ENCODE measurements at regions of chr1 and their contacts with region 1.

Region 1: DNA sequence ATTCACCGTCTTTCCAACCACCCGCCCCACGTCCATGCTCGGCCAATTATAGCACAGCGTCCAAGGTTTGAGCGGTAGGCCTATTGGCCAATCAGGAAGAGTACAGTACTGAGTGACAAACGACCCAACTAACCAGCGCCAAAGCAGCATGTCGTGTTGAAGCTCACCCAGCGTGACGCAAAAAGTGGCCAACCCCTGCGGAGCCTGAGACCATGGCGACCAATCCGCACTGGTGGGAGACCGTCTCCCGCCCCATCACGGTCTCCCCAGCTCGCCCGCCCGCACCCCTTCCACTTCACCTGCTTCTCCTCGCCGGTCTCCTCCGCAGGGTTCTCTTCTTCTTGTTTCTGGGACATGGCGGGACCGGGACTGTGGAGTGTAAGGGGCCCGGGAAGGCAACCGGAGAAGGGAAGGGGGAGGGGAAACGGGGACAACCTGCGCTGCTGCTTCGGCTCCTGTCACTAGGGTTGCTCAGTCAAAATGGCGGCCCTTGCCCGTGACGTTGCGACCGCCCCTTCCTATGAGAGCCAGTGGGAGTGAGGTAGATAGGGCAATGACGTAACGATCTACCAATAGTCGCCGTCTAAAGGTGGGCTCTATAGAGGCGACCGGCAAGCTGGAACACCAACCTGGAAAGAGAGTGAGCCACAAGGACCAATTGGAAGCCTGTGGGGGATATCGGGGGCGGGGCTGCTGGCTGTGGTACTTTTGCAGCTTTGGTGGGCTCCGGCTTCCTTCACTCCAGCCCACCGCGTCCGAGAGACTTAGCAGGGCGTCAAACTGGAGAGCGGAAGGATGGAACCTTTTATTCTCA is at the start of gene ENSA:
- DNase-seq: peak; percentile 95
- ATAC-seq: peak; percentile 94
- H3K4me3 Mint-ChIP-seq: no peak within 1 kb of the TSS
- H3K27ac Mint-ChIP-seq: no peak within 1 kb of the TSS
- H3K4me1 Mint-ChIP-seq: peaks cover 57% of the 10 kb centered on the region
- H3K27me3 Mint-ChIP-seq: no peaks in the 10 kb centered on the region
- CTCF ChIP-seq: no peak
- total RNA-seq, gene ENSA: 219 to 254 TPM (median 224 TPM) in 3 replicates

Region 2: GRCh38 chr1:150552093-150552691 is 77.1 kb before region 1 on chr1:
- CTCF ChIA-PET with region 1: no interaction called
- POLR2A ChIA-PET with region 1: no interaction called
- DNase-seq: no peak
- ATAC-seq: no peak; the same call in 1 of the 2 replicates
- H3K4me3 Mint-ChIP-seq: no peak overlapping the region
- H3K27ac Mint-ChIP-seq: no peak overlapping the region
- H3K4me1 Mint-ChIP-seq: peaks cover 35% of the 10 kb centered on the region
- H3K27me3 Mint-ChIP-seq: peaks cover 32% of the 10 kb centered on the region
- CTCF ChIP-seq: no peak

Region 3: GRCh38 chr1:150567717-150568593 is 61.4 kb before region 1 on chr1:
- CTCF ChIA-PET with region 1: interaction called, 53 read pairs
- POLR2A ChIA-PET with region 1: interaction called, 12 read pairs
- DNase-seq: peak; percentile 91
- ATAC-seq: peak; percentile 78
- H3K4me3 Mint-ChIP-seq: peak overlapping the region; percentile 57
- H3K27ac Mint-ChIP-seq: peak overlapping the region; percentile 100
- H3K4me1 Mint-ChIP-seq: peaks cover 77% of the 10 kb centered on the region
- H3K27me3 Mint-ChIP-seq: no peaks in the 10 kb centered on the region
- CTCF ChIP-seq: no peak

Region 4: DNA sequence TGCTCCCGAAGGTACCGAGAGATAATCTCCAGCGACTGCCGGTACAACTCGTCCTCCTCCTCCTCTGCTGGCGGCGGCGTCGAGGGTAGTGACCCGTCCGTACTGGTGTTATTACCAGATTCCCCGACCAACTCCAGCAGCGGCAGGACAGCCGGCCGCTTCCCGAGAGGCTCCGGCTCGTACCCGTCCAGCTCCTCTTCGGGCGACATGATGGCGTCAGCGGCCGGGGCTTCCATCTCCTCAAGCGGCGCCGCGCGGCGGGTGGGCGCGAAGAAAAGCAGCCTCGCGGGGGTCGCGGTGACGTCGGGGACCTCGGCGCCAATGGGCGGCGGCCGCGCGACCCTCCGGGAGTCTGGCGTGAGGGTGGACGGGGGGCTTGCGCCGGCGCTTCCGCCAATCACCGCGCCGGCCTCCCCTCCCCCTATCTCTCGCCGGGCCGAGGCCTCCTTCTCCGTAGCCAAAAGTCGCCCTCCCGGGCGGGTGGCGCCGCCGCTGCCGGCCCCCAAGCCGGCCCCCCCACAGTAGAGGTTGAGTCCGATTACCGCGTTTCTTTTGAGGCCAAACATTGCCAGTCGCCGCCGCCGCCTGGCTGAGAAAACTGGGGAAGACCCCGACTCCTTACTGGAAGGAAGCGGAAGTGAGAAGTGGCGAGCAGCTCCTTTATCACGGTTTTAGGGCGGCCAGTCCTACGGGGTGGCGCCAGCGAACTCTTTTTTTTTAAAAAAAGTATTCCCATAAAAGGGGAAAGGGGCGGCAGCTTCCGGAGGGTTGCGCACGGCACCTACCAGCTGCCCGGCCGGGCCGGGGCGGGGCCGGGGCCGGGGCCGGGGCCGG is 50.1 kb before region 1 on chr1 and contains the start of gene MCL1:
- CTCF ChIA-PET with region 1: interaction called, 5 read pairs
- POLR2A ChIA-PET with region 1: interaction called, 56 read pairs
- DNase-seq: peak; percentile 89
- ATAC-seq: peak; percentile 88
- H3K4me3 Mint-ChIP-seq: peak within 1 kb of the TSS; percentile 92
- H3K27ac Mint-ChIP-seq: peak within 1 kb of the TSS; percentile 100
- H3K4me1 Mint-ChIP-seq: peaks cover 41% of the 10 kb centered on the region
- H3K27me3 Mint-ChIP-seq: no peaks in the 10 kb centered on the region; the same call in 1 of the 2 replicates
- CTCF ChIP-seq: no peak
- total RNA-seq, gene MCL1: 191 to 212 TPM (median 204 TPM) in 3 replicates

Region 5: DNA sequence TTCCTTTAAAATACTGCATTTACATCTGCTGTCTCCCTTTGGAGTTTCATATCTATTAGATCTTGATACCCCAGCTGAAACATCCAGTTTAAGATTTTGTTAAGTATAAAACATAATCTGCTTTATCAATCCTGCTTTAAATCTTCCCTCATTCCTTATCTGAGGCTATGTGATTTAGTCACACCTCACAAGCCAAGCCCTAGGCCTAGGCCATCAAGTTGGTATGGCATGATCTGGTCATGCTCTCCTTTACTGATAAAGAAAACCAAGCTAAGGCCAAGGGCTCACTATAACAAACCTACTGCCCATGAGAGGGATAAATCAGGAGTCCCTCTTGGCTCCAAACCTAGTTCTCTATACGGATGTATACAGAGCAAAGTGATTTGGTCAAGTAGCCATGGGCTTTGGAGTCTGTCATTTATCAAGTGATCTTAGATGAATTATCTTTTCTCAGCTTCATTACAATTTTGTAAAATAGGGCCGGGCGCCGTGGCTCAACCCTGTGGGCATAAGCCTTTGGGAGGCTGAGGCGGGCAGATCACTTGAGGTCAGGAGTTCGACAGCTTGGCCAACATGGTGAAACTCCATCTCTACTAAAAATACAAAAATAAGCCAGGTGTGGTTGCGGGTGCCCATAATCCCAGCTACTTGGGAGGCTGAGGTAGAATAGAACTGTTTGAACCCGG is 22.7 kb before region 1 on chr1:
- CTCF ChIA-PET with region 1: interaction called, 3 read pairs
- POLR2A ChIA-PET with region 1: interaction called, 10 read pairs
- DNase-seq: no peak
- ATAC-seq: no peak
- H3K4me3 Mint-ChIP-seq: no peak overlapping the region
- H3K27ac Mint-ChIP-seq: peak overlapping the region; percentile 90
- H3K4me1 Mint-ChIP-seq: peaks cover 42% of the 10 kb centered on the region
- H3K27me3 Mint-ChIP-seq: no peaks in the 10 kb centered on the region; the same call in 1 of the 2 replicates
- CTCF ChIP-seq: no peak

Region 6: DNA sequence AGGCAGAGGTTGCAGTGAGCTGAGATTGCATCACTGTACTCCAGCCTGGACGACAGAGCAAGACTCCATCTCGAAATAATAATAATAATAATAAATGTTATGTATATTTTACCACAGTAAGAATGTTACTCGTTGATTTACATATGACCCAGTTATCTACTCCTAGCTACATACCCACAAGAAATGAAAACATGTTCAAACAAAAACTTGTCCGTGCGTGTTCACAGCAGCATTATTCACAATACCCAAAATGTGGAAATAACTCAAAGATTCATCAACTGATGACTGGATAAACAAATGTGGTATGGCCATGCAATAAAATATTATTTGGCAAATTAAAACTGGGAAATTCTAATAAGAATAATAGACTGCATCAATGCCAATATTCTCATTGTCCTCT is 31.8 kb after region 1 on chr1:
- CTCF ChIA-PET with region 1: no interaction called
- POLR2A ChIA-PET with region 1: no interaction called
- DNase-seq: no peak
- ATAC-seq: no peak
- H3K4me3 Mint-ChIP-seq: no peak overlapping the region
- H3K27ac Mint-ChIP-seq: no peak overlapping the region
- H3K4me1 Mint-ChIP-seq: peaks cover 8% of the 10 kb centered on the region
- H3K27me3 Mint-ChIP-seq: no peaks in the 10 kb centered on the region
- CTCF ChIP-seq: no peak

Region 7: DNA sequence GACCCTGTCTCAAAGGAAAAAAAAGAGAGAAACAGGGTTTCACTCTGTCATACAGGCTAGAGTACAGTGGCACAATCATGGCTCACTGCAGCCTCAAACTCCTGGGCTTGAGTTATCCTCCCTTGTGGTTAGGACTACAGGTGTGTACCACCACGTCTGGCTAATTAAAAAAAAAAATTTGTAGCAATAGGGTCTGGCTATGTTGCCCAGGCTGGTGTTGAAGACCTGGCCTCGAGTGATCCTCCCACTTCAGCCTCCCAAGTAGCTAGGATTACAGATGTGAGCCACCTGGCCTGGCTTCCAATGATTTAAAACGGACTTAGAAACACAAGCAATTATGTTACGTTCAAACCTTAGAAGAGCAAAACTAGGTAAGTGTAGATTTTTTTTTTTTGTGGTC is 45.6 kb after region 1 on chr1:
- CTCF ChIA-PET with region 1: no interaction called
- POLR2A ChIA-PET with region 1: no interaction called
- DNase-seq: no peak
- ATAC-seq: no peak
- H3K4me3 Mint-ChIP-seq: no peak overlapping the region
- H3K27ac Mint-ChIP-seq: no peak overlapping the region
- H3K4me1 Mint-ChIP-seq: no peaks in the 10 kb centered on the region; the same call in 1 of the 2 replicates
- H3K27me3 Mint-ChIP-seq: no peaks in the 10 kb centered on the region
- CTCF ChIP-seq: no peak

Region 8: DNA sequence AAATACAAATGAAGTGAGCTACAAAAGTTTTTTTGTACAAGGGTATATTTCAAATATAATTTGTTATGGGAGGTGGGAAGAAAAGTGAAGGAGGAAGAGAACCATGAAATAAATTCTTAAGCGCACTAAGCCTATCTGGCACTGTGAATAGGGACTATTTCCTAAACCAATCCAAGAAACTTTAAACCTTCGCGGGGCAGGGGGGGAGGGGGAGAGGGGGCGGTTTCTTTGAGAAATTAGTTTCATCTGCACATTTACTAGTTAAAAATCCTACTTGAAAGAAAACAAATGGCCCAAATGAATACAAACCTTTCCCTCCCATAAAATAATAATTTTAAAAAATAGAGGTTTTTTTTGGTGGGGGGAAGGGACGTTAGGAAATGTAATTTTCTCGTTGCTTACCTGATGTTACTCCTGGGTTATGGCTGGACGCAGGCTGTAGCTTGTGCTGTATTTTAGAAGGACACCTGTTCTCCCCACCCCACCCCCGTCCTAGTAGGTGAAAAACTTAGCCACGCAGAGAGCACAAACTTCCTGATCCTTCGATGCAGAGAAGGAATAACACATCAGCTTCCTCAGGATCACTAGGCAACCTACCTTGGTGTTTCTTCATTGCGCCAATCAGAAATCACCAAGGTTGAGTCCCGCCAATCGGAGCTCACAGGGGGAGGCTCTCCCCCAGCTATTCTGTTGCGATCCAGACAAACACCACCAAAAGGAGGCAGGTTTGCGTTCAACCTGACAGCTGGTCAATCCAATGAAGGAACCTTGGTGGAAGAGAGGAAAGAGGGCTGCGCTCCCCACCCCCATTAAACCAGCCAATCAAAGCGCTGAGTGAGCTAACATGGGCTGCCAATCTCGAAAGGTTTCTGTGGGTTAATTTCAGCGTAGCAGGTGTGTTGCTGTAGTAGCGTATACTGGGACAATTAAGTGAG is 67.5 kb after region 1 on chr1 and contains the start of gene GOLPH3L:
- CTCF ChIA-PET with region 1: no interaction called
- POLR2A ChIA-PET with region 1: interaction called, 11 read pairs
- DNase-seq: peak; percentile 92
- ATAC-seq: peak; percentile 100
- H3K4me3 Mint-ChIP-seq: peak within 1 kb of the TSS; percentile 92
- H3K27ac Mint-ChIP-seq: peak within 1 kb of the TSS; percentile 98
- H3K4me1 Mint-ChIP-seq: peaks cover 8% of the 10 kb centered on the region
- H3K27me3 Mint-ChIP-seq: no peaks in the 10 kb centered on the region
- CTCF ChIP-seq: no peak
- total RNA-seq, gene GOLPH3L: 39.5 to 46.1 TPM (median 43.3 TPM) in 3 replicates